Transverse colon (tissue), 4 donors: ENCODE measurements at regions of chr7 and their contacts with region 1.

Region 1: DNA sequence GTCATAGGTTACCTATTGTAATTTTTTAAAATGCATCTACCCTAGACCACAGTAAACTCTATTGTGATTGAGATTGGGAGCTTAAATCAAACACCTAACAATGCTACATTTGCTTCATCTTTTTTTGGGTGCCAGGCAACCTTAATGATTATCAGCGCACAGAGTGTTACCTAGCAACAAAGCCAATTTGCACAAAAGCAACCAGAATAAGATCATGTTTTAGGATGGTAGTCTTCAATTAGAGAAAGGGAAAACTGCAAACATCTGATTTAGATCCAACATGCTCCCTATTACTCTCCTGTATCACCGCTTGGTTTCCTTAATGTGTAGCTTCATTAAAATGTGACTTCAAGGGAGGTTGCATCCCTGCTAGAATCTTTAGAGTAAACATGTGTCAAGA is 226.9 kb downstream of the ABCA13 start:
- DNase-seq: no peak
- H3K4me3 ChIP-seq: no peak overlapping the region
- H3K27ac ChIP-seq: no peak overlapping the region
- H3K4me1 ChIP-seq: no peaks in the 10 kb centered on the region
- H3K27me3 ChIP-seq: no peaks in the 10 kb centered on the region
- CTCF ChIP-seq: no peak
- EP300 ChIP-seq: no peak
- POLR2A ChIP-seq: no peak

Region 2: GRCh38 chr7:47926704-47927103 is 471.5 kb before region 1 on chr7:
- in situ Hi-C with region 1: no loop called
- intact Hi-C with region 1: loop called (anchors 5 kb)
- DNase-seq: no peak
- H3K4me3 ChIP-seq: no peak overlapping the region
- H3K27ac ChIP-seq: no peak overlapping the region
- H3K4me1 ChIP-seq: no peaks in the 10 kb centered on the region
- H3K27me3 ChIP-seq: no peaks in the 10 kb centered on the region
- CTCF ChIP-seq: no peak
- EP300 ChIP-seq: no peak
- POLR2A ChIP-seq: no peak